AG04449 (cell line): ENCODE measurements at regions of chr2 and their contacts with region 1.

Region 1: DNA sequence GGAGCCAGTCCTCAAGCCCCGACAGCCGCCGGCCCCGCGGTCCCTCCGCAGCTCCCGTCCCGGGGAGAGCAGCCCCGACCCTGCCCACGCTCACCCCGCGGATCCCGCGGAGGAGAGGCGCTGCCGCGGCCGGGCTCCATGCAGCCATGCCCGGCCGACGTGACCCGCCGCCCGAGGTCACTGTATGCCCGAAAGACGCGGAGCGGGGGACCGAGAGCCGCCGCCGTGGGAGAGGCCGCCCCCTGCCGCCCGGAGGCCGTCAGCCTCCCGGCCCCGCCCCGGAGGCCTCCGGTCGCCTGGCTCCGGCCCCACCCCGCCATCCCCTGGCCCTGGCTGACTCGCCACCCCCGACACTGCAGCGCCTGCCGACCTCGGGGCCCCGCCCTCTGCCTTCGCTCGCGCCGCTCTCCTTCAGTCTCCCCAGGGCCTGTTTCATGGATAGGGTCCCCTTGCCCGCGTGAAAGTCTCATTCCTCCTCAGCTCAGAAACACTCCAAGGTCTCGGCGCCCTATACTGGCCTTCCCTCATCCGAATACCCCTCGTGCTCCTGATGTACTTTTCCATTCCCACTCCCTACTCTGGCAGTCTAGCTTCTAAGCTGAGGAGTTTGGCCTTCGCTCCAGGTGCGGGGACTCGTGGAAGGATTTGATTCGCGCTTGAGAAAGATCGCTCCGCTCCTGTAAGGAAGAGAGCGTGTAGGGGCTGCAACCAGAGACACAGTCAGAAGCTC is at the start of gene BOLA3:
- DNase-seq: no peak
- H3K4me3 ChIP-seq: peak within 1 kb of the TSS; percentile 74
- CTCF ChIP-seq: peak; percentile 63

Region 2: GRCh38 chr2:74092275-74092674 is 55.6 kb before region 1 on chr2:
- CTCF ChIA-PET with region 1: no interaction called
- POLR2A ChIA-PET with region 1: no interaction called
- DNase-seq: no peak
- H3K4me3 ChIP-seq: no peak overlapping the region
- CTCF ChIP-seq: no peak

Region 3: DNA sequence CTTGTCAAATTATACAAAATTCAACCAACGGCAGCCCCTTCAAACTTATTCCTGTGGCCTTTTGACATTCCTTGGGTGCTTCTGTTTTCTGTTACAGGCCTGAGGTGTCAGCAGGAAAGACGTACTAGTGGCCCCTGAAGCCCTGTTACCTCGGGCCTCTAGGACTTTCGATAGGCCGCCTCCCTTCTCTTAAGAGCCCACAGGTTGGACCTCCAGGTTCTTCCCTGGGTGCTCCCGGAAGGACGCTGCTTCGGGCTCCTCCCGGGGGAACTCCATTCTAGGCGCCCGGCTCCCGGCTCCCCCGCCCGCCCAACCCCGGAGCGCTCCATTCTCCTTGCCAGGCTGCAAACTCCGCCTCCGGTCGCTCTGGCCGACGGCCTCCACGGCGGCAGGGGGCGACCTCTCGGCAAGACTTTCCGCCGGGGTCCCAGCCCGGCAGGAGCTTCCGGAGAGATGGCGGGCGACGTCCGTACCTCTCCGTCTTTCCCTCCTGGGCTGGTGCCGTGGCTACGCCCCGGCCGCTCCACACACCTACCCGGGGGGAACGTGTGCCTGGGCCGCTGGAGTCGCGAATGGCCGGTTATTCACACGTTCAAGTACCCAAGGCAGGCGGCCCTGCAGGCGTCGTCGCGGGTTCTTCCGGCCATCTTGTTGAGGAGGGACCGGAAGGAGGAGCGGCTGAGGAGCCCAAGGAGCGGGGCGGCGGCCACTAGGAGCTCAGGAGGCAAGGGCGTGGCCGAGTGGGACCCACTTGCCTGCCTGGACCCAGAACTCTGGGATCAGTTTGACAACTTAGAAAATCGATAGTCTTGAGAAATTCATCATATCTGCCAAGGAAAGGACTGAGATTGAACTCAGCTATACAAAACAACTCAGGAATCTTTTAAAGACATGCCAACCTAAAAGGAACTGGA is 27.7 kb before region 1 on chr2:
- CTCF ChIA-PET with region 1: interaction called, 17 read pairs
- POLR2A ChIA-PET with region 1: no interaction called
- DNase-seq: peak; percentile 12
- H3K4me3 ChIP-seq: peak overlapping the region; percentile 80
- CTCF ChIP-seq: peak; percentile 83

Region 4: GRCh38 chr2:74168739-74169138 is 20.8 kb after region 1 on chr2:
- CTCF ChIA-PET with region 1: interaction called, 17 read pairs
- POLR2A ChIA-PET with region 1: no interaction called
- DNase-seq: no peak
- H3K4me3 ChIP-seq: no peak overlapping the region
- CTCF ChIP-seq: no peak

Region 5: DNA sequence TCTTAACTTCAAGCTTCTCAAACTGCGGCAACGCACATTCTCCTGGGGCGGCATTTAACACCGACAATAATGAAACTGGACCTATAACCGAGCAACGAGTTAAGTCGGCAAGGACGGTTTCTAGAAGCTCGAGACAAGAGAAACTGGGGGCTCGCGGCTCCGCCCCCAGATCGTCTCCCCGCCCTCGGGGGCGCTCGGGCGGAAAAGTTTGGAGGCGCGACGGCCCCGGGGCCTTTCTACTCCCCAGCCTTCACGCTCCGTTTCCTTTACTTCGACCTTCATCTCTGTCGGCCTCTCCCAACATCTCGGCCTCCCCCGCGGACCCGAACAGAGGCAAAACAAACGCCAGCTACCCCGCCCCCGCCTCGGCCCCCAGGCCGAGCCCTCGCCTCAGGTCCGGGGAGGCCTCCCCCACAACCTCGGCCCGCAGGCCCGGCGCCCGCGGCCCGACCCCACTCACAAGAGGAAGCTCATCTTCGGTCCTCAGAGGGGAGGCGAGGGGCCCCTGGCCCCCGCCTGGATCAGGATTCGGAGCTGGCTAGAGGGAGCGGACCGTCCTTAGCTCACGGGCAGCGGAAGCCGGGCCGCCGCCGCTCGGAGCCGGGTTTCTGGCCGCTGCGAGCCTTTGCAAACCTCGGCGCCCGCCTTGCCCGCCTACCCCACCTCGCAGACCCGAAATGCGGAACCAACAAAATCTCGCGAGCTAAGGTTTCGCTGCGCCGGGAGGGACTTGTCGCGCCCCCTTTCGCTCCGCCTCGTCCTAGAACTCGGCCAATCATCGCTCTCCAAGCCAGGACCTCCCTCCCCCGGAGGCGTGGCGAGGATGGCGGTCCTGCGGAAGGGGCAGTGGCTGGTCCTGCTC is 30.5 kb after region 1 on chr2 and contains the start of gene MOB1A:
- CTCF ChIA-PET with region 1: interaction called, 11 read pairs
- POLR2A ChIA-PET with region 1: interaction called, 6 read pairs
- DNase-seq: peak; percentile 85
- H3K4me3 ChIP-seq: peak within 1 kb of the TSS; percentile 77
- CTCF ChIP-seq: no peak

Region 6: GRCh38 chr2:74261204-74261864 is 113.4 kb after region 1 on chr2:
- CTCF ChIA-PET with region 1: no interaction called
- POLR2A ChIA-PET with region 1: no interaction called
- DNase-seq: no peak
- H3K4me3 ChIP-seq: no peak overlapping the region
- CTCF ChIP-seq: peak; percentile 57